Panc1 (cell line): ENCODE measurements at regions of chr13 and their contacts with region 1.

Region 1: GRCh38 chr13:96020155-96020575 is 33.0 kb downstream of the UGGT2 start:
- DNase-seq: peak; percentile 30
- ATAC-seq: peak; percentile 90
- H3K4me3 ChIP-seq: no peak overlapping the region
- H3K27ac ChIP-seq: no peak overlapping the region
- H3K4me1 ChIP-seq: no peaks in the 10 kb centered on the region
- H3K27me3 ChIP-seq: no peaks in the 10 kb centered on the region
- CTCF ChIP-seq: peak; percentile 71

Region 2: DNA sequence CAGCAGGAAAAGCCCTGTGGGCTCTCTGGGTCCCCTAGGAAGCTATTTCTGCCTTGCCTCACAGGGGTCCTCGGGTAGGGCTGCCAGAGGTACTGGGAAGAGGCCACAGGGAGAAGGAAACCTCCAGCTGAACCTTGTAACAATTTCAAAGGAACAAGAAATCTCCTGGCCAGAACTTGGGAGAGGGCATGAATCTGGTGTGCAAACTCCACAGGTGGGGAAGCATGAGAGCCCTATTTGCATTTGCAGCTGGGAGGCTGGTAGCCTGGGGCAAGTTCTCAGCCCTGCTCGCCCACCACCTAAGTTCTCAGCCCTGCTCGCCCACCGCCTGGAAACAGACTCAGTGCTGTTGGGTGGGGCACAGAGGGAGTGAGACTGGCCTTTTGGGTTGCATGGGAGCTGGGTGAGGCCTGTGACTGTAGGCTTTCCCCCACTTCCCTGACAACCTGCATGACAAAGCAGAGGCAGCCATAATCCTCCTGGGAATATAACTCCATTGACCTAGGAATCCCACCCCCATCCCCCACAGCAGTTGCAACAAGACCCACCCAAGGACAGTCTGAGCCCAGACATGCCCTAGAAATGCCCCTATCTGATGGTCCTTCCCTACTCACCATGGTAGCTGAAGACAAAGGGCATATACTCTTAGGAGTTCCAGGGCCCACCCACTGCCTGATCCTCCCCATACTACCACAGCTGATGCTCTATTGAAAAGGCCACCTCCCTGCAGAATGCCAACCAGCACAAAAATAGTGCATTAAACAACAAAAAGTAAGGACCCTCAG is 21.4 kb after region 1 on chr13:
- CTCF ChIA-PET with region 1: no interaction called
- POLR2A ChIA-PET with region 1: no interaction called
- in situ Hi-C with region 1: no loop called
- intact Hi-C with region 1: no loop called
- DNase-seq: no peak
- ATAC-seq: no peak
- H3K4me3 ChIP-seq: no peak overlapping the region
- H3K27ac ChIP-seq: no peak overlapping the region
- H3K4me1 ChIP-seq: no peaks in the 10 kb centered on the region
- H3K27me3 ChIP-seq: no peaks in the 10 kb centered on the region
- CTCF ChIP-seq: no peak

Region 3: DNA sequence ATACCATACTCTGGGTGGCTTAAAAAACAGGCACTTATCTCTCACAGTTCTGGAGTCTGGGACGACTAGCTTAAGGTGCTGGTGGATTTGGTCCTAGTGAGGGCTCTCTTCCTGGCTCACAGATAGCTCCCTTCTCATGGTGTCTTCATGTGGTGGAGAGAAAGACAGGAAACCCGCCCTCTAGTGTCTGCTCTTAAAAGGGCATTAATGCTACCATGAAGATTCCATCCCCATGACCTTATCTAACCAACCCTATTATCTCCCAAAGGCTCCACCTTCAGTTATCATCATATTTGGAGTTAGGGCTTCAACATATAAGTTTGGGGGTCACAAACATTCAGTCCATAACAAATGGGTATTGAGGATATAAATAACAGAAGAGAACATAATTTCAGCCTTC is 209.2 kb after region 1 on chr13:
- CTCF ChIA-PET with region 1: interaction called, 3 read pairs
- POLR2A ChIA-PET with region 1: no interaction called
- in situ Hi-C with region 1: no loop called
- intact Hi-C with region 1: loop called (anchors 10 kb)
- DNase-seq: peak; percentile 2
- ATAC-seq: no peak
- H3K4me3 ChIP-seq: no peak overlapping the region
- H3K27ac ChIP-seq: no peak overlapping the region
- H3K4me1 ChIP-seq: no peaks in the 10 kb centered on the region
- H3K27me3 ChIP-seq: no peaks in the 10 kb centered on the region
- CTCF ChIP-seq: peak; percentile 60

Region 4: GRCh38 chr13:96817336-96817941 is 797.3 kb after region 1 on chr13:
- CTCF ChIA-PET with region 1: interaction called, 5 read pairs
- POLR2A ChIA-PET with region 1: no interaction called
- in situ Hi-C with region 1: no loop called
- intact Hi-C with region 1: loop called (anchors 1 kb)
- DNase-seq: no peak
- ATAC-seq: no peak
- H3K4me3 ChIP-seq: no peak overlapping the region
- H3K27ac ChIP-seq: no peak overlapping the region
- H3K4me1 ChIP-seq: no peaks in the 10 kb centered on the region
- H3K27me3 ChIP-seq: no peaks in the 10 kb centered on the region
- CTCF ChIP-seq: peak; percentile 57; the same call in 1 of the 2 replicates

Region 5: GRCh38 chr13:96958286-96958891 is 938.2 kb after region 1 on chr13:
- CTCF ChIA-PET with region 1: no interaction called
- POLR2A ChIA-PET with region 1: no interaction called
- in situ Hi-C with region 1: no loop called
- intact Hi-C with region 1: loop called (anchors 10 kb)
- DNase-seq: no peak
- ATAC-seq: peak; percentile 63; the same call in 1 of the 2 replicates
- H3K4me3 ChIP-seq: no peak overlapping the region
- H3K27ac ChIP-seq: no peak overlapping the region
- H3K4me1 ChIP-seq: no peaks in the 10 kb centered on the region
- H3K27me3 ChIP-seq: no peaks in the 10 kb centered on the region
- CTCF ChIP-seq: peak; percentile 71; the same call in 1 of the 2 replicates